ENCODE measurements at regions of chr2 and their contacts with region 1.

Region 1: GRCh38 chr2:201118121-201118960 is 2.4 kb downstream of the CFLAR start:
- DNase-seq: peak; percentile 97
- ATAC-seq: peak; percentile 45
- H3K4me3 Mint-ChIP-seq: peak overlapping the region; percentile 95
- H3K27ac Mint-ChIP-seq: peak overlapping the region; percentile 92
- H3K4me1 Mint-ChIP-seq: peaks cover 43% of the 10 kb centered on the region
- H3K27me3 Mint-ChIP-seq: no peaks in the 10 kb centered on the region
- CTCF ChIP-seq: peak; percentile 43

Region 2: GRCh38 chr2:201064797-201065329 is 53.5 kb before region 1 on chr2:
- CTCF ChIA-PET with region 1: interaction called, 36 read pairs
- POLR2A ChIA-PET with region 1: interaction called, 42 read pairs
- intact Hi-C with region 1: loop called (anchors 5 kb)
- DNase-seq: no peak
- ATAC-seq: no peak
- H3K4me3 Mint-ChIP-seq: no peak overlapping the region
- H3K27ac Mint-ChIP-seq: no peak overlapping the region
- H3K4me1 Mint-ChIP-seq: peaks cover 63% of the 10 kb centered on the region
- H3K27me3 Mint-ChIP-seq: peaks cover 1% of the 10 kb centered on the region
- CTCF ChIP-seq: no peak

Region 3: GRCh38 chr2:201130524-201131186 is 12.3 kb after region 1 on chr2:
- CTCF ChIA-PET with region 1: interaction called, 93 read pairs
- POLR2A ChIA-PET with region 1: no interaction called
- intact Hi-C with region 1: loop called (anchors 1 kb)
- DNase-seq: peak; percentile 61
- ATAC-seq: peak; percentile 42
- H3K4me3 Mint-ChIP-seq: peak overlapping the region; percentile 95
- H3K27ac Mint-ChIP-seq: peak overlapping the region; percentile 98
- H3K4me1 Mint-ChIP-seq: peaks cover 55% of the 10 kb centered on the region
- H3K27me3 Mint-ChIP-seq: no peaks in the 10 kb centered on the region
- CTCF ChIP-seq: no peak

Region 4: DNA sequence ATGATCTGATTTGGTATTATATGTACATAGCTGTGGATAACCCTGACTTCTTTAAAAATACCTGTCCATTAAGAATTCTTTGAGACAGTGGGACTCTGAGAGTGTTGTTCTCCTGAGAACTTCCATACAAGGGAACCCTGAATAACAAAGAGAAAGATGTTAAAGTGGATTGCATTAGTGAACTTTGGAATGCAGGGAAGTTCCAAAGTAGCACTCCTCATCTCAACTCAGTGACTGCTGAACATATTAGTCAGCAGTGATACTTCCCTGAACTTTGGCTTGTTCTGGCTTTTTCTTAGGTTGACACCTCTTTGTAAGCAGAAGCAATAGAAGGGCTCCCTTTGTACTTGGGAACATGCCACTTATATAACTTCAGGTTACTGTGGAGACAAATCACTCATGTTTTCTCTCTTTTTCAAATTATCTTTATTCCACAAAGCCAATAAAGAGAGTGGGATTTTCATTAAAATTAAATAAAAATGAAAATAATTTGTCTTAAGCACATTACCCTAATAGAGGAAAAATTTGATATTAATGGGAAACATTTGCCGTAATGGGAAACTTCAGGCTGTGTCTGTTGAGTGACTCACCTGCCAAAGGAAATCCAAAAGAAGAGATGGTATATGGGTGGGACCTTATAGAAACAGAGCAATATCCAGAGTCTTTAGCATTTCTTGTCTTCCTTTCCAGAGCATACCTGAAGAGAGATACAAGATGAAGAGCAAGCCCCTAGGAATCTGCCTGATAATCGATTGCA is 30.9 kb after region 1 on chr2:
- CTCF ChIA-PET with region 1: interaction called, 14 read pairs
- POLR2A ChIA-PET with region 1: interaction called, 20 read pairs
- intact Hi-C with region 1: no loop called
- DNase-seq: no peak
- ATAC-seq: no peak
- H3K4me3 Mint-ChIP-seq: no peak overlapping the region
- H3K27ac Mint-ChIP-seq: peak overlapping the region; percentile 59
- H3K4me1 Mint-ChIP-seq: peaks cover 41% of the 10 kb centered on the region
- H3K27me3 Mint-ChIP-seq: no peaks in the 10 kb centered on the region
- CTCF ChIP-seq: no peak